ENCODE measurements at regions of chr12 and their contacts with region 1.

Region 1: DNA sequence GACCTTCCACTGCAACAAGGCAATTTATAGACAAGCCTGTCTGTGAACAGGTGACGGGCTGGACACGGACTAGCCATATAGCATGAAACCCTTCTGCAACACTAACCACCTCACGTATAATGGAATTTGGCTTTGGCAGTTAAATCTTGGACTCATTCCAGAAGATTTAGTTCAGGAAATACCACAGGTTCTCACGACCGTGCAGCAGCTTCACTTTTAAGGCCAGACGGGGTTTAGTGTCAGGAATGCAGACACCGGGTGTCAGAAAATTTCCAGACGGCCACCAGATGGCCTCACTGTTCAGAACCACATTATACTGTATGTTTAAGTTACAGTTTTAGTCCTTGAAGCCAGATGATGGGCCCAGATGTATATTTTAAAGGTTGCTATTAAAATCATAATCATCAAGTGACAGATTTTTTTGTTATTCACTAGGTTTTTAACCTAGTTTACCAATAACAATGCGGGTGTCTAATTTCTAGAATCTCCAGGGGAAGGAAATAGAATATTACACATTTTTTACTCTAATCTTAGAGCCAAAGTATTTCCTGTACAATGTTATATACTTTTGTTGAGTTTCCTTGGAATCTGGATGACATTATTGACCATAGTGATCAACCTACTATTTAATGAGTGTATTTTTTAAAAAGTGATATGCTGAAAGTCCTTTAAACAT is 90.5 kb upstream of the TMPO start:
- DNase-seq: peak; percentile 74
- H3K4me3 Mint-ChIP-seq: no peak overlapping the region
- H3K27ac Mint-ChIP-seq: no peak overlapping the region
- H3K4me1 Mint-ChIP-seq: peaks cover 3% of the 10 kb centered on the region
- H3K27me3 Mint-ChIP-seq: no peaks in the 10 kb centered on the region

Region 2: GRCh38 chr12:98060411-98060810 is 364.5 kb before region 1 on chr12:
- CTCF ChIA-PET with region 1: no interaction called
- POLR2A ChIA-PET with region 1: no interaction called
- intact Hi-C with region 1: no loop called
- DNase-seq: no peak
- H3K4me3 Mint-ChIP-seq: no peak overlapping the region
- H3K27ac Mint-ChIP-seq: no peak overlapping the region
- H3K4me1 Mint-ChIP-seq: no peaks in the 10 kb centered on the region
- H3K27me3 Mint-ChIP-seq: no peaks in the 10 kb centered on the region

Region 3: GRCh38 chr12:98653866-98654493 is 229.1 kb after region 1 on chr12:
- CTCF ChIA-PET with region 1: interaction called, 4 read pairs
- POLR2A ChIA-PET with region 1: no interaction called
- intact Hi-C with region 1: loop called (anchors 2 kb)
- DNase-seq: no peak
- H3K4me3 Mint-ChIP-seq: no peak overlapping the region
- H3K27ac Mint-ChIP-seq: no peak overlapping the region
- H3K4me1 Mint-ChIP-seq: peaks cover 14% of the 10 kb centered on the region
- H3K27me3 Mint-ChIP-seq: no peaks in the 10 kb centered on the region

Measured in activated CD4-positive, alpha-beta memory T cell treated with anti-CD3 and anti-CD28 coated beads for 36 hours (primary cell).